Activated CD4-positive, alpha-beta T cell treated with anti-CD3 and anti-CD28 coated beads for 36 hours (primary cell): ENCODE measurements at regions of chr1 and their contacts with region 1.

Region 1: GRCh38 chr1:27332536-27333281 is 9.1 kb upstream of the SYTL1 start:
- DNase-seq: peak; percentile 72
- ATAC-seq: peak; percentile 91
- H3K4me3 Mint-ChIP-seq: no peak overlapping the region
- H3K27ac Mint-ChIP-seq: no peak overlapping the region
- H3K4me1 Mint-ChIP-seq: peaks cover 27% of the 10 kb centered on the region
- H3K27me3 Mint-ChIP-seq: no peaks in the 10 kb centered on the region

Region 2: GRCh38 chr1:27284425-27285273 is 48.1 kb before region 1 on chr1:
- CTCF ChIA-PET with region 1: no interaction called
- POLR2A ChIA-PET with region 1: no interaction called
- intact Hi-C with region 1: no loop called
- DNase-seq: peak; percentile 95
- ATAC-seq: peak; percentile 93
- H3K4me3 Mint-ChIP-seq: no peak overlapping the region
- H3K27ac Mint-ChIP-seq: peak overlapping the region; percentile 37
- H3K4me1 Mint-ChIP-seq: peaks cover 2% of the 10 kb centered on the region
- H3K27me3 Mint-ChIP-seq: no peaks in the 10 kb centered on the region

Region 3: DNA sequence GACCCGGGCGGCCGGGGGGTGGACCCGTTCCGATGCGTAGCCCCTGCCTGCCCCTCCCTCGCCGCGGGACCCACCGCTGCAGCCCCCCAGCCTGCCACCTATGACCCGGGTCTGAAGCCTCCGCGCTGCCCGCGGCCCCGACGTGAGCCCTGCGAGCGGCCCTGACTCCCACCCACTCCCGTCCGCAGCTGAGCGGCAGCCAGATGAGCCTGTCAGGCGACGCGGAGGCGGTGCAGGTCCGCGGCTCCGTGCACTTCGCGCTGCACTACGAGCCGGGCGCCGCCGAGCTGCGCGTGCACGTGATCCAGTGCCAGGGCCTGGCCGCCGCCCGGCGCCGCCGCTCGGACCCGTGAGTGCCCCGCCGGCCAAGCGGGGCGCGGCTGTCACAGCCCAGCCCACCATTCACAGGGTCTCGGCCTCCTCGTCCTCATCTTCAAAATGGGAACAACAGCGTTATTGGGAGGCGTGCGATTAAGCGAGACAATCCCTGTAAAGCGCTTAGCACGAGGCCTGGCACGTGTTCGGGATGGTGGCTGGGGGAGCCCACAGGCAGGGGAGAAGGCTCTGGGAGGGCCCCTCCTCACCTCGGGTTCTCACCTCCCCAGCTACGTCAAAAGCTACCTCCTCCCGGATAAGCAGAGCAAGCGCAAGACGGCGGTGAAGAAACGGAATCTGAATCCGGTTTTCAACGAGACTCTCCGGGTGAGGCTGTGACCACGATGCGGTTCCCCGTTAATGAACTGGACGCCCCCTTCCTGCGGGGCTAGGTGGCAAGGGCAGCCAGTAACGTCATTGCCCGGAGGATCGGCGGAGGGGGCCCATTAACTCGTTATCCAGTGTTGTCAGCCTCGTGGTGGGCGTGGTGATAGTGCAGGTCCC is 17.3 kb after region 1 on chr1:
- CTCF ChIA-PET with region 1: interaction called, 43 read pairs
- POLR2A ChIA-PET with region 1: interaction called, 6 read pairs
- intact Hi-C with region 1: no loop called
- DNase-seq: peak; percentile 72
- ATAC-seq: peak; percentile 77
- H3K4me3 Mint-ChIP-seq: peak overlapping the region; percentile 8
- H3K27ac Mint-ChIP-seq: no peak overlapping the region
- H3K4me1 Mint-ChIP-seq: peaks cover 15% of the 10 kb centered on the region
- H3K27me3 Mint-ChIP-seq: no peaks in the 10 kb centered on the region

Region 4: GRCh38 chr1:27542408-27543273 is 209.9 kb after region 1 on chr1:
- CTCF ChIA-PET with region 1: no interaction called
- POLR2A ChIA-PET with region 1: no interaction called
- intact Hi-C with region 1: no loop called
- DNase-seq: peak; percentile 72
- ATAC-seq: peak; percentile 97
- H3K4me3 Mint-ChIP-seq: no peak overlapping the region
- H3K27ac Mint-ChIP-seq: peak overlapping the region; percentile 73
- H3K4me1 Mint-ChIP-seq: peaks cover 13% of the 10 kb centered on the region
- H3K27me3 Mint-ChIP-seq: no peaks in the 10 kb centered on the region